ENCODE measurements at regions of chr6 and their contacts with region 1.

Region 1: DNA sequence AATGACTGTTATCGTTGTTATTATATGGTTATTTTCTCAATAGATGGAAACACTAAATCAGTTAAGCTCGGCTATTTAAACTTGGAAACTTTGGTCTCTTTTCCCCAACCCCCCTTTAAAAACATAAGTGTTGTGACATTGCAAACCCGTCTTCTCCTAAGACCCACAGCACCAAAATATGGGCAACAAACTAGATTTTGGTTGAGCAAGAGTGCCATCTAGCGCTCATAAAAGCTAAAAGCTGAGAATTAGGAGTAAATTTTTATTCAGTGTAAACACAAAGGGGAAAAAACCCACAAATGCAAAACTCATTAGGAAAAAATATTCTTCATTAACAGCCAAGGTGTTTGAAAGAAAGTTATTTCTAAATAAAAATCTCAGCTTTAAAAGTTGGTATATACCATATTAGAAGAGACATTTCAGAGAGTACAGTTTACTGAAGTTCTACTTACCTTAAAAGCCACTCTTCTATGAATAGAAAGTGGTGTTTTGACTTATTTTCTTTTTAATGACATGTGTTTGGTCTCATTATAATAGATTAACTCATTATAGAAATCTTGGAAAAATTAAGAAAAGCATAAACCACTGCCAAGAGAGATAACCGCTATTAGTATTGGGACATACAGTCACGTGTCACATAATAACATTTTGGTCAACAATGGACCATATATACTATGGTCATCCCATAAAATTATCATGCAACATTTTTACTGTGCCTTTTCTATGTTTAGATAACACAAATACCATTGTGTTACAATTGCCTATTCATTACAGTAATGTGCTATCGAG is 21.1 kb downstream of the SESN1 start:
- DNase-seq: peak in 1 of 2 donors; percentile 68
- ATAC-seq: peak in 7 of 8 donors; percentile 55 to 79 (median 70)
- H3K4me3 ChIP-seq: no peak overlapping the region
- H3K27ac ChIP-seq: peak overlapping the region in 1 of 10 donors; percentile 25
- H3K4me1 ChIP-seq: peaks cover 0 to 58% (median 44%) of the 10 kb centered on the region in 9 donors
- H3K27me3 ChIP-seq: no peaks in the 10 kb centered on the region
- CTCF ChIP-seq: peak; percentile 39 to 79 (median 68)

Region 2: DNA sequence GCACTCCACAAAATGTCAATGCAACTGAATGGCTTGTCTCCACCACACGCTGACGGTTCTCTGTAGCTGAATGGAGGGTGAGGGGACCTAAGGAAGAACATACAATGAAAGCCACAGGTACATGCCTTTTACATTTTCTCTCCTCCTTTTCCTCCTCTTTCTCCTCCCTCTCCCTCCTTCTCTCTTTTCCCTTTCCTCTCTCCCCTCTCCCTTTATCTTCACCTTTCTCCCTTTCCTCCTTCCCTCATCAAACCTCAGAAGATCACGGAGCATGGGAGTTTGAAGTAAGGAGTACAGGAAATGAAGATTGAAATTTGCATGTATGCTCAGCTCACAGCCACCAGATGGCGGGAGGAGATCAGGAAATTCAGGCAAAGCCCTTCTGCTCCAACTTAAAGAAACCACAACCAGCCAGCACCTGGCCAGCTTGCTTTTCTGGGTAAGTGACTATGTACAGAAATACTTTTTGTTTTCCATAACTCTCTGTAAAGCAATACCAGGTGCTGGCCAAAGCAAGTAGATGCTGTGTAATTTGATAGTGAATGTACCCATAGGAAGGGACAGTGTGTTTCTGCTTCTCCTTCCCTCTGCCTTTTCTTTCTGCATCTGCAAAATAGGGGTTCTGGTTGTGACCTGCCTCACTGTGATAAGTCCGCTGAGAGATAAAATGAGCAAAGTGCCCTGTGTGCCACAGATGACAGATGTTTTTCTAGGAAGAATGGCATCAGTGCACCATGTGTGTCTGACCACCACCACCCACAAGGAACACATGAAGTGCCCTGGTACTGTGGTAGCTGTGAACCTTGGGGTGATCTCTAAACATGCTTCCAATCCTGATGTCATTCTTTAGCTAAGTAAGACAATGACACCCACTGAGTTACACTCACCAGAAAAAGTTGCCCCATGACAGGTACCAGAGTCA is 531.4 kb before region 1 on chr6:
- intact Hi-C with region 1: loop called in 9 of 10 experiments (anchors 1 to 10 kb)
- DNase-seq: peak; percentile 40 to 72
- ATAC-seq: peak; percentile 65 to 90 (median 82)
- H3K4me3 ChIP-seq: peak overlapping the region in 1 of 10 donors; percentile 6
- H3K27ac ChIP-seq: no peak overlapping the region
- H3K4me1 ChIP-seq: peaks cover 0 to 9% (median 0%) of the 10 kb centered on the region in 9 donors
- H3K27me3 ChIP-seq: no peaks in the 10 kb centered on the region
- CTCF ChIP-seq: peak; percentile 76 to 92 (median 85)

Region 3: GRCh38 chr6:108782179-108783041 is 291.1 kb before region 1 on chr6:
- intact Hi-C with region 1: loop called in 2 of 10 experiments (anchors 1 to 10 kb)
- DNase-seq: peak; percentile 82
- ATAC-seq: peak; percentile 89 to 96 (median 93)
- H3K4me3 ChIP-seq: peak overlapping the region in 9 of 10 donors; percentile 31 to 64 (median 55)
- H3K27ac ChIP-seq: peak overlapping the region in 5 of 10 donors; percentile 5 to 42 (median 33)
- H3K4me1 ChIP-seq: peaks cover 0 to 21% (median 7%) of the 10 kb centered on the region in 9 donors
- H3K27me3 ChIP-seq: no peaks in the 10 kb centered on the region
- CTCF ChIP-seq: peak; percentile 41 to 93 (median 82)

Region 4: GRCh38 chr6:108848116-108848868 is 225.2 kb before region 1 on chr6 and contains the start of gene ARMC2:
- intact Hi-C with region 1: loop called in 3 of 10 experiments (anchors 5 to 10 kb)
- DNase-seq: peak; percentile 93 to 97
- ATAC-seq: peak; percentile 97 to 98 (median 98)
- H3K4me3 ChIP-seq: peak within 1 kb of the TSS; percentile 56 to 88 (median 75)
- H3K27ac ChIP-seq: peak within 1 kb of the TSS; percentile 63 to 95 (median 85)
- H3K4me1 ChIP-seq: peaks cover 0 to 51% (median 31%) of the 10 kb centered on the region in 9 donors
- H3K27me3 ChIP-seq: no peaks in the 10 kb centered on the region
- CTCF ChIP-seq: no peak
- total RNA-seq, gene ARMC2: 10.6 to 16.4 (median 13.0) TPM

Region 5: DNA sequence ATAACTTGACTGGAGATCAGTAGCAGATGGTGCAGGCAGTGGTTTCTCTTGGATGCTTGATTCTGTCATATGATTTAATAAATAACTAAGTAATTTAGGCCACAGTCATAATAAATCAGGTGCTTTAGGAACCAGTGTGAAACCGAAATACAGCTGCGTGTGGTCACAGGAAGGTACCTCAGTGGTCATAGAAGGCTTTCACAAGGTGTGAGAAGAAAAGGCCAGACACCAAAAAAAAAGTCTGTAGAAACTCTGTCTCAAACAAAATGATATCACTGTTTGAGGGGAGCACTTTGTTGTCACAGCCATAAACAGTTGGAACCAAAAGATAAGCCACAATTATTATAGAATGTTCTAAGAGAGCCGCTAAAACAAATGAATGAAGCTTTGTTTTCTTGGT is 168.8 kb before region 1 on chr6:
- intact Hi-C with region 1: loop called in 6 of 10 experiments (anchors 5 to 10 kb)
- DNase-seq: no peak
- ATAC-seq: no peak
- H3K4me3 ChIP-seq: no peak overlapping the region
- H3K27ac ChIP-seq: peak overlapping the region in 2 of 10 donors; percentile 49 to 78
- H3K4me1 ChIP-seq: peaks cover 0 to 46% (median 13%) of the 10 kb centered on the region in 9 donors
- H3K27me3 ChIP-seq: no peaks in the 10 kb centered on the region
- CTCF ChIP-seq: no peak

Region 6: GRCh38 chr6:109002051-109002697 is 71.4 kb before region 1 on chr6:
- intact Hi-C with region 1: loop called in 3 of 10 experiments (anchors 5 to 10 kb)
- DNase-seq: no peak
- ATAC-seq: peak; percentile 17 to 86 (median 35)
- H3K4me3 ChIP-seq: no peak overlapping the region
- H3K27ac ChIP-seq: peak overlapping the region; percentile 29 to 70 (median 59)
- H3K4me1 ChIP-seq: peaks cover 2 to 92% (median 77%) of the 10 kb centered on the region in 9 donors
- H3K27me3 ChIP-seq: no peaks in the 10 kb centered on the region
- CTCF ChIP-seq: no peak

Region 7: DNA sequence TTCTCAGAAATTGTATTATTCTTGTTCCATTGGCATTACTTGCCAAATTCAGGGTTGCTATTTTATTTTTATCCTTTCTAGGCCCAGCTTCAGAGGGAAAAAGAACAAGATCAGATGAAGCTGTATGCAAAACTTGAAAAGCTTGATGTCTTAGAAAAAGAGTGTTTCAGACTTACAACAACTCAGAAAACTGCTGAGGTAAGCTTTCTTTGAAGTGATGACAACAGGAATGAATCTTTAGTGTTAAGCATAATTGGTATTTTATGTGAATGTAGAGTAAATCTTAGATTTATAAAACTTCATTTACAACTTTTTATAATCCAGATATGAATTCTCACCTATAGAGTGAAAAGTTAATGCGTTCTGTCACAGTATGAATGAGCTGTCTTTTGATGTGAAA is 80.2 kb after region 1 on chr6:
- intact Hi-C with region 1: no loop called
- DNase-seq: no peak
- ATAC-seq: no peak
- H3K4me3 ChIP-seq: no peak overlapping the region
- H3K27ac ChIP-seq: no peak overlapping the region
- H3K4me1 ChIP-seq: no peaks in the 10 kb centered on the region
- H3K27me3 ChIP-seq: no peaks in the 10 kb centered on the region
- CTCF ChIP-seq: no peak

Measured in heart right ventricle (tissue), 16 donors.